Sigmoid colon (tissue), 7 donors: ENCODE measurements at regions of chr14 and their contacts with region 1.

Region 1: DNA sequence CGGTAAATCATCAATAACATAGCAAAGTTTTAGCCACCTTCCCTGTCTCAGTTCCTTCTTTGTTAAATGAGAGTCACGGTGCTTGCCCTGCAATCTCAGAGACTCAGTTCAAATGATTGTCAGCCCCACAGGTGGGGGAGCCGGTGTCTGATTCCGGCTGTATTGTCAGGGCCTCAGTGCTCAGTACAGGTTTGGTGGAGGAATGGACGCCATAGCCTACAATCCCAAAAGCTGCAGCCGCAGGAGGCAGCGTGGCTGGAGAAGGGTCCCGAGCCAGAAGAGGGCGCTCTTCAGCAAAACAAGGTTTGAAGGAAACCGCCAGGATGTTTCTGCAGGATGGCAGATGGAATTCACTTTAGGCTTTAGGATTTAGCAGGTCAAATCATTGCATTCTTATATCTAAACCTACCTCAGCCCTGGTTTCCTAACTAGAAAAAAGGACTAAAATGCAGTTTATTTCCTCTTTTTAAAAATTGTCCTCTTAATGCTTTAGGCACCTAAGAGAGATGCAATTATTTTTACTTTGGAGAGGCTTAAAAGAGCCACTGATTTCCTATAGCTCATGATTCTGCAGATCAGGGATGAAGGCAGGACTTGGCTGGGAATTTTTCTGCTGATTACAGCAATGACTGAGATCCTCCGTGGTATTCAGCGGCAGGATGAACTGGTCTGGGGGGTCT is 29.2 kb downstream of the FOS start:
- DNase-seq: peak; percentile 93
- H3K4me3 ChIP-seq: no peak overlapping the region
- H3K27ac ChIP-seq: no peak overlapping the region
- H3K4me1 ChIP-seq: peaks cover 0 to 26% (median 19%) of the 10 kb centered on the region in 4 donors
- H3K27me3 ChIP-seq: no peaks in the 10 kb centered on the region
- CTCF ChIP-seq: peak; percentile 73 to 93 (median 78)
- EP300 ChIP-seq: no peak
- POLR2A ChIP-seq: no peak

Region 2: GRCh38 chr14:75132382-75133086 is 175.3 kb before region 1 on chr14:
- intact Hi-C with region 1: loop called (anchors 1 kb)
- DNase-seq: no peak
- H3K4me3 ChIP-seq: no peak overlapping the region
- H3K27ac ChIP-seq: peak overlapping the region; percentile 9 to 57 (median 34)
- H3K4me1 ChIP-seq: peaks cover 0 to 16% (median 8%) of the 10 kb centered on the region in 4 donors
- H3K27me3 ChIP-seq: no peaks in the 10 kb centered on the region
- CTCF ChIP-seq: peak; percentile 69 to 87 (median 72)
- EP300 ChIP-seq: no peak
- POLR2A ChIP-seq: no peak

Region 3: DNA sequence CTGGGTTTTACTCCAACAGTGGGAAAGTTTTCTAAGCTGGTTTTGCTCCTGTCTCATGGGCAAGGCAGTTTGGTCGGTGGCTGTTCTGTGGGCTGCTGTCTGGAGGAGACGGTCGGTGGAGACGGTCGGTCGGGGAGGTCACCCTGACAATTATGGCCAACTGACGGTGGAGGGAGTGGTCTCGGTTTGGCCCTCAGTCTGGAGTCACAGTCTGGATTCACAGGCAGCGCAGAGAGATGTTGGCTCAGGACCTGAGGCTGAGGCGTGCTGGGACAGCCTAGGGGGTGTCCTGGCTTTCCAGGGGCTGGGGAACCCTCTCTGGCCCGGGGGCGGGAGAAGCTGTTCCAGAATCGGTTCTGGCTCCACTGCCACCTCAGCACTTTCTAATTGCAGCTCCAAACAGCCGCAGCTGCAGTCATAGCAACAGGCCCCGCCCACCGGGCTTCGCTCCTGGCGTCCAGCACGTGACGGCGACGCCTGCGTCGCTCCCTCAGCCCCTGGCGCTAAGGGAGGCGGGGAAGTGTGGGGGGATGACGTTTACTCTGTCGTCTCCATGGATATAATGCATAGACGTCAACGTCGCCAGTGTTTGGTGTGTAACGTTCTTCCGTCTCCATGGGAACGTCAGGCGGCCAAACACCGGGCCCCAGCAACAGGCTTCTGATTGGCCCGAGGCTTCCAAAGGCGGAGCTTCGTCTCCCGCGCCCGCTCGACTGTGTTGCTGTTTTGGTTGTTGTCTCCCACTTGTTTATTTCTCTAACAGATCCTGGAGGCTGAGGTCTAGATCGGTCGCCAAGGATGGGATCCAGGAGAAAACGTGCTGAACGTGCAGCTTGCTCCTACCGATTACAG is 49.0 kb before region 1 on chr14:
- intact Hi-C with region 1: no loop called
- DNase-seq: peak; percentile 99
- H3K4me3 ChIP-seq: peak overlapping the region; percentile 30 to 51 (median 48)
- H3K27ac ChIP-seq: peak overlapping the region; percentile 87 to 98 (median 92)
- H3K4me1 ChIP-seq: peaks cover 0 to 23% (median 14%) of the 10 kb centered on the region in 4 donors
- H3K27me3 ChIP-seq: no peaks in the 10 kb centered on the region
- CTCF ChIP-seq: no peak
- EP300 ChIP-seq: peak; percentile 78 to 99 (median 96)
- POLR2A ChIP-seq: peak; percentile 50 to 70

Region 4: DNA sequence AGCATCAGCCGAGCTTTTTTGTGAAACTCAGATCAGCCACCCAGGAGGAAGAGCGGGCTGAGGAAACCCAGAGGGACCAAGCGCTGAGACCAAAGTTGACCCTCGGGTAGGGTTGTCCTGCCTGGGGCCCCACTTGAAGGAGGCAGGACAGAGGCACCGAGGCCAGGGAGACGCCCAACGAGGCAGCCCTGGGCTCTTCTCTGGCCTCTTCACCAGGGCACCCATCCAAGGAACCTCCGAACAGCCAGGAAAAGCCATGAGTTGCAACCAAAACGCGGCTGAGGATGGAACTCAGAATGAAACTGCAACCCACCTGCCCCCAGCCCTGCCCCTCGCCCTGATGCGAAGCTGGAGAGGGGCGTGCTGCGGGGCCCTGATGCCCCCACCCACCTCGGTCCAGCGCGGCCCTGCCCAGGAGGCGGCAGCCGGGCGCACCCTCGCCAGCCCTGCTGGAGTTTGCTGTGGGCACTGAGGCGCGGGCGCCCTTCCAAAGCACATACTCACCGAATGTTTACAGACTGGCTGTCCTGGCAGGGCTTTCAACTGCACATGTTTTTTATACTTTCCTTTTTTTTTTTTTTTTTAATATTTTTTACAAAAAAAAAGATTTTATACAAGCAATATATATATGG is 161.9 kb after region 1 on chr14:
- intact Hi-C with region 1: loop called (anchors 5 kb)
- DNase-seq: peak; percentile 90
- H3K4me3 ChIP-seq: no peak overlapping the region
- H3K27ac ChIP-seq: peak overlapping the region; percentile 66 to 79 (median 75)
- H3K4me1 ChIP-seq: peaks cover 0 to 57% (median 41%) of the 10 kb centered on the region in 4 donors
- H3K27me3 ChIP-seq: no peaks in the 10 kb centered on the region
- CTCF ChIP-seq: no peak
- EP300 ChIP-seq: no peak
- POLR2A ChIP-seq: no peak

Region 5: GRCh38 chr14:75560962-75561432 is 253.2 kb after region 1 on chr14:
- intact Hi-C with region 1: loop called (anchors 5 kb)
- DNase-seq: peak; percentile 73
- H3K4me3 ChIP-seq: no peak overlapping the region
- H3K27ac ChIP-seq: no peak overlapping the region
- H3K4me1 ChIP-seq: peaks cover 0 to 14% (median 6%) of the 10 kb centered on the region in 4 donors
- H3K27me3 ChIP-seq: no peaks in the 10 kb centered on the region
- CTCF ChIP-seq: peak; percentile 29 to 71 (median 54)
- EP300 ChIP-seq: no peak
- POLR2A ChIP-seq: no peak